ENCODE measurements at regions of chr17 and their contacts with region 1.

Region 1: DNA sequence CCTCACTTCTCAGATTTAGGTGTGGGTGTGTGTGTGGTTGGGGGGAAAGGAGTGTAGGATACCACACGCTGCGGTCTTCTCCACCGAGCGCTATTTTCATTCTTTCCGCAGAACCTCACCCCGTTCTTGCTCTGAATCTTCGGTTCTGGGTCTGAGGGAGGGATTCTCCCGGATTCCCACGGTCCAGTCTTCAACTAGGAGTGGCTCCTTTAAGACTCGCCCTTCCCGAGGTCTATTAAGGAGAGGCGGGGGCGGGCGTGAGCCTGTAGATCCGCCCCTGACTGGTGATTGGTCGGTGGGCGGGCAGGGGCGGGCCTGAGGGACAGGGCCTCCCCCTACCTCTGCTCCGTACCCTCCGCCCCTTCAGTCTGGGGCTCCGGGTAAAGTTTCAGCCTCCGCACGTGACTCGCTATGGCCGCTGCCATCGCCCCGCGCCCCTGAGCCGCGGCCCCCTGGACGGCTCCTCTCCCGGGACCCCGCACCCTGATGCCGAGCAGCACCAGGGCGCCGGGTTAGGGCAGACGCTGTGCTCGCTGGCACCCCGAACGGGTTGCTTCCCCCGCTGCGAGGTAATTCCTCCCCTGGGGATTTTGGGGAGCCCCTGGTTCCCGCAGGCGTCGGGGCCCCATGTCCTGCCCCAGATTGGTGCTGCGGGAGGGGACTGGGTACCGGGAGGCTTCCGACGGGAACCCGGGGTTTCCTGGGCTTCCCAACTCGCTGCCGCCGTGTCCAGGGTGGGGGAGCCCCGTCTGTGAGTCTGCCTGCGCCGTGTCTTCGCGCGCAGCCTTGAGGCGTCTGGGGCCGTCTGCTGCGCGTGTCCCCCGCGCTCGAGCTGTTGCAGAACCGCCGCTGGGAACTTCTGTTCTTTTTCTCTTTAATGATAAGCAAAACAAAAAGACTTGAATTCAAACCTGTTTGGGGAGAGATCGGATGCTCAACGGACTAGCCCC is 9.2 kb downstream of the RARA start:
- DNase-seq: peak; percentile 88
- ATAC-seq: peak; percentile 65
- H3K4me3 Mint-ChIP-seq: peak overlapping the region; percentile 93
- H3K27ac Mint-ChIP-seq: peak overlapping the region; percentile 98
- H3K4me1 Mint-ChIP-seq: peaks cover 85% of the 10 kb centered on the region
- H3K27me3 Mint-ChIP-seq: no peaks in the 10 kb centered on the region
- CTCF ChIP-seq: no peak

Region 2: GRCh38 chr17:40107522-40108174 is 210.5 kb before region 1 on chr17:
- CTCF ChIA-PET with region 1: no interaction called
- POLR2A ChIA-PET with region 1: no interaction called
- intact Hi-C with region 1: no loop called
- DNase-seq: no peak
- ATAC-seq: peak; percentile 29
- H3K4me3 Mint-ChIP-seq: peak overlapping the region; percentile 72
- H3K27ac Mint-ChIP-seq: peak overlapping the region; percentile 83
- H3K4me1 Mint-ChIP-seq: peaks cover 69% of the 10 kb centered on the region
- H3K27me3 Mint-ChIP-seq: no peaks in the 10 kb centered on the region
- CTCF ChIP-seq: no peak

Region 3: DNA sequence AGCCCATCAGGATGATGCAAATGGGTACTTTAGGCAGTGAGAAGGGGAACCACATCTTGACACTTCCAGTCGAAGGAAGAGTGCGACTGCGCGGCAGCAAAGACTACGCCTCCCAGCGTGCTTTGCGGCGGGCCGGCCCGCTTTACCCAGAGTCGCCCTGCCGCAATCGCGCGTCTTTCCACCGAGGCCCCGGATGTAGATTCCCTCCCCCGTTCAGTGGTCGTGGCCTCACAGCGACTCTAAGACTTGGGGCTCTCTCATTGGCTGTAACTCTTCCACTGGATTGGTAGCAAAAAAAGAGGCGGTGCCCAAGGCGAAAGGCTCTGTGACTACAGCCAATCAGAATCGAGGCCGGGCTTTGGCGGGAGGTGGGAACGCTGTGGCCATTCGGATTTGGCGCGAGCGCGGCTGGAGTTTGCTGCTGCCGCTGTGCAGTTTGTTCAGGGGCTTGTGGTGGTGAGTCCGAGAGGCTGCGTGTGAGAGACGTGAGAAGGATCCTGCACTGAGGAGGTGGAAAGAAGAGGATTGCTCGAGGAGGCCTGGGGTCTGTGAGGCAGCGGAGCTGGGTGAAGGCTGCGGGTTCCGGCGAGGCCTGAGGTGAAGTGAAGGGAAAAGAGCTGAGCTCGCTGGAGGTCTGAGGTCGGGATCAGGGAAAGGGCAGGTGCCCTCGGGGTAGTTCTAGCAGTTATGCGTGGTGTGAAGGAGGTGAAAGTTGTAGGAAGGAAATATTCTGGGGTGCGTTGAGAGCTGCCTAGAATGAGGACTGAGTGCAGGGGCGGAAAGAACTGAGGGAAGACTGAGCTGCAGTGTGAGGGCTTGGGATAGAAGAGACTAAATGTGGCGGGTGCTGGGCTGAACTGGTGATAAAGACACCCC is 30.4 kb before region 1 on chr17 and contains the start of gene CDC6:
- CTCF ChIA-PET with region 1: no interaction called
- POLR2A ChIA-PET with region 1: no interaction called
- intact Hi-C with region 1: loop called (anchors 1 kb)
- DNase-seq: peak; percentile 93
- ATAC-seq: peak; percentile 95
- H3K4me3 Mint-ChIP-seq: peak within 1 kb of the TSS; percentile 97
- H3K27ac Mint-ChIP-seq: peak within 1 kb of the TSS; percentile 87
- H3K4me1 Mint-ChIP-seq: peaks cover 18% of the 10 kb centered on the region
- H3K27me3 Mint-ChIP-seq: no peaks in the 10 kb centered on the region
- CTCF ChIP-seq: no peak
- total RNA-seq, gene CDC6: 9.2 and 9.7 TPM in 2 replicates

Region 4: DNA sequence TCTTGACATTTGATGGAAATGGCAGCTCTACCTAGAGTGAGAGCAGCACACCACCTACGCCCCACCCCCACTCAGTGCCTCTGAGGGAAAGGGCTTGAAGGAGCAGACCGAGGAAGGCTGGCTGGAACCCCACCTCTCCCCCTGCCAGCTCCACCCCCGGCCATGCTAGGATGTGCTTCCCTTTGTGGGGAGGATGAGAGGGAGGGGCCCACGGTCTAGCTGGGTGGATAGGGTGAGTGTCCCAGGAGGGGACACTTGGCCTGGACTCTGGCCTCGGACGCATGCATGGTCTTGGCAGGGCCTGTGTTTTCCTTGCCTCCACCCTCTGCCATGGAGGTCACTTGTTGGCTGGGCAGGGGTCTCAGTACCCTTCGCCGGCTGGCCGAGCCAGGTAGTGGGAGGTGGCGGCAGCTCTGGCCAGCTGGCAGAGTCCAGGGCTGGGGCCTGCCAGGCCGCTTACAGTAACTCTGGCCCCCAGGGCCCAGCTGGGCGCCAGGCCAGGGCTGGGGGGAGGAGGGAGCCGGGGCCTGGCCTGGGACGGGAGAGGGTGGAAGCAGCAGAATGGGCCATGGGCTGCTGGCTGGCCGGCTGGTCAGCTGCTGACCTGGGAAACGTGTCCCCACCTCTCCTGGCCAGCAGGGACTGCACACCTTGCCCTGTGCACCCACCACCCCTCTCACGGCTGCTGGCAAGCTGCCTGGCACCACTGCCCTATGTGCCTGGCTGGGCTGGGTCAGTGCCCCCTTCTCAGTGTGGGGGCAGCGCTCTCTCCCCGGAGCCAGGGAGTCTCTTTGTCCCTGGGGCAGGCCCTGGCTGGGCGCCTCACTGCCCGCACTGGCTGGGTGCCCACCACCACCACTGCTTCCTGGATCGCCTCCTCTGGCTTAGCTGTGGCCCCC is 13.8 kb after region 1 on chr17:
- CTCF ChIA-PET with region 1: interaction called, 3 read pairs
- POLR2A ChIA-PET with region 1: interaction called, 154 read pairs
- intact Hi-C with region 1: no loop called
- DNase-seq: no peak
- ATAC-seq: no peak
- H3K4me3 Mint-ChIP-seq: no peak overlapping the region
- H3K27ac Mint-ChIP-seq: peak overlapping the region; percentile 50
- H3K4me1 Mint-ChIP-seq: peaks cover 78% of the 10 kb centered on the region
- H3K27me3 Mint-ChIP-seq: no peaks in the 10 kb centered on the region
- CTCF ChIP-seq: no peak

Region 5: GRCh38 chr17:40355123-40355803 is 37.1 kb after region 1 on chr17:
- CTCF ChIA-PET with region 1: interaction called, 466 read pairs
- POLR2A ChIA-PET with region 1: interaction called, 32 read pairs
- intact Hi-C with region 1: no loop called
- DNase-seq: peak; percentile 86
- ATAC-seq: peak; percentile 78
- H3K4me3 Mint-ChIP-seq: no peak overlapping the region
- H3K27ac Mint-ChIP-seq: peak overlapping the region; percentile 59
- H3K4me1 Mint-ChIP-seq: peaks cover 44% of the 10 kb centered on the region
- H3K27me3 Mint-ChIP-seq: no peaks in the 10 kb centered on the region
- CTCF ChIP-seq: peak; percentile 53

Region 6: DNA sequence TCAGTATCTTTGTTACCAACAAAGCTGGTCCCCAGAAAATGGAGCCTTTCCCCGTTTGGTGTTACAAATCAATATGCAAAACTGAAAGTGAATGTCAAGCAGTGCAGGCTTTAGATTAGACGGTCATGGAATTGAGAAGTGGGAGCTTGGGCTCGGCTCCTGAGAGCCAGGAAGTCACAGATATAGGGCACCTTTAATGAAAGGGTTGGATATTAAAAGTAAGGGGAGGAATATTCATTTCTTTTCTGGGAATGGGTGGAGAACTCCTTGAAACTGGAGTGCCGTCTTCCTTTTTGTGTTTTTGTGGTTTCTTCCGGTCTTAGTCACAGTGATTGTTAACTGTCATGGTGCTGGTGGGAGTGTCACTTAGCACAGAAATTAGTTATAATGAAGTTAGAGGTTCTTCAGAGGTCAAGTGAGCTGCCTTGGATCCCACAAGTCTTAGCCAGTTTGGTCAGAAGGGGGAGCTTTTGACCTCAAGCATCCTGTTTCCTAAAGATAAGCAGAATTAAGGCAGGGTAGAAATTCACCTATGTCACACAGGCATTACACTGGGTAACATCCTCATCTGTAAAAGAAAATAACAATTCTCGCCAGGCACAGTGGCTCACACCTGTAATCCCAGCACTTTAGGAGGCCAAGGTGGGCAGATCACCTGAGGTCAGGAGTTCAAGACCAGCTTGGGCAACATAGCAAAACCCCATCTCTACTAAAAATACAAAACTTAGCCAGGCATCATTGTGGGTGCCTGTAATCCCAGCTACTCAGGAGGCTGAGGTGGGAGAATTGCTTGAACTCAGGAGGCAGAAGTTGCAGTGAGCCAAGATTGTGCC is 1361.0 kb after region 1 on chr17:
- CTCF ChIA-PET with region 1: no interaction called
- POLR2A ChIA-PET with region 1: interaction called, 3 read pairs
- intact Hi-C with region 1: loop called (anchors 1 kb)
- DNase-seq: no peak
- ATAC-seq: peak; percentile 57
- H3K4me3 Mint-ChIP-seq: peak overlapping the region; percentile 80
- H3K27ac Mint-ChIP-seq: peak overlapping the region; percentile 91
- H3K4me1 Mint-ChIP-seq: peaks cover 45% of the 10 kb centered on the region
- H3K27me3 Mint-ChIP-seq: no peaks in the 10 kb centered on the region
- CTCF ChIP-seq: no peak

Measured in activated B cell treated with CpG ODN at 0.5 μM for 24 hours (primary cell).